HepG2 (cell line): ENCODE measurements at regions of chr1 and their contacts with region 1.

Region 1: GRCh38 chr1:206106328-206107167 is 10.6 kb downstream of the AVPR1B start:
- DNase-seq: peak; percentile 52
- ATAC-seq: peak; percentile 82
- H3K4me3 ChIP-seq: no peak overlapping the region
- H3K27ac ChIP-seq: no peak overlapping the region
- H3K4me1 ChIP-seq: peaks cover 13% of the 10 kb centered on the region
- H3K27me3 ChIP-seq: no peaks in the 10 kb centered on the region
- CTCF ChIP-seq: peak; percentile 95
- EP300 ChIP-seq: no peak
- POLR2A ChIP-seq: no peak
- RAD21 ChIP-seq: peak; percentile 91

Region 2: GRCh38 chr1:205791568-205792180 is 314.9 kb before region 1 on chr1:
- CTCF ChIA-PET with region 1: no interaction called
- POLR2A ChIA-PET with region 1: no interaction called
- in situ Hi-C with region 1: loop called (anchors 10 kb)
- intact Hi-C with region 1: no loop called
- DNase-seq: peak; percentile 48
- ATAC-seq: peak; percentile 99
- H3K4me3 ChIP-seq: no peak overlapping the region
- H3K27ac ChIP-seq: no peak overlapping the region
- H3K4me1 ChIP-seq: no peaks in the 10 kb centered on the region
- H3K27me3 ChIP-seq: no peaks in the 10 kb centered on the region; a peak in 1 of 5 replicates
- CTCF ChIP-seq: peak; percentile 87
- EP300 ChIP-seq: no peak
- POLR2A ChIP-seq: no peak
- RAD21 ChIP-seq: peak; percentile 81

Region 3: DNA sequence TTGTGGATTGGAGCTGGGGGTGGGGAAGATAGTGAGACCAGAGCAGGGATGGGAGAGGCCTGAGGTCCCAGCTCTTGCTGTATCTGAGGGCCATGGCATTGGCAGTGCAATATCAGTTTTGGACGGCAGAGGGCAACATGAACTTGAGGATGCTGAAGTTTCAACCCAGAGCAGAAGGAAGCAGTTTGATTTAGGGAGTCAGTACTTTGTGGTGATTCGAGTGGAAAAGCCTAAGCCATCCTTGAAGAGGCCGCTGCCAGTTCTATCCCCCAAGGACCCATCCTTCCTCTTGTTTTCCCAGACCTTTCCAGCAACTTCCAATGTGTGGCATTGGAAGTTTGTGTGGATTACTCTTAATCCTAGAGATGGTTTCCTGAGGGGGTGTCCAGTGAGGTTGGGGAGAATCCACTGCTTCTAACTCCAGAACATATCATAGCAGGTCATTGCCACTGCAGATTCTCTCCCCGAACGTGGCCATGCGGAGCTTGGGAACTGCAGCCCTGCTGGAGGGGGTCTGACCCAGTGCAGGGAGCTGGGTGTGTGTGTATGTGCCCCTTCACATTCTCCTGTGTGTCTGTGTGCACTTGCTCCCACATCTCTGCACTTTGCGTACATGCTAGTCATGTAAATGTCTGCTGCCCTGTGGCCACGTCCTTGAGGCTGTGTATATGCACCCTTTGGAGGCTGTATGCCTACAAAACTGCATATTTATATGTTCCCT is 187.4 kb before region 1 on chr1:
- CTCF ChIA-PET with region 1: interaction called, 5 read pairs
- POLR2A ChIA-PET with region 1: no interaction called
- in situ Hi-C with region 1: loop called (anchors 10 kb)
- intact Hi-C with region 1: loop called (anchors 1 kb)
- DNase-seq: peak; percentile 52
- ATAC-seq: peak; percentile 85
- H3K4me3 ChIP-seq: no peak overlapping the region
- H3K27ac ChIP-seq: no peak overlapping the region
- H3K4me1 ChIP-seq: 0 out of 2 replicates have a peak, but pooled peaks cover 4% of the 10 kb centered on the region
- H3K27me3 ChIP-seq: peaks cover 2 to 3% of the 10 kb centered on the region in 2 experiments; a peak in 2 of 5 replicates
- CTCF ChIP-seq: peak; percentile 91
- EP300 ChIP-seq: no peak
- POLR2A ChIP-seq: no peak
- RAD21 ChIP-seq: peak; percentile 82

Region 4: DNA sequence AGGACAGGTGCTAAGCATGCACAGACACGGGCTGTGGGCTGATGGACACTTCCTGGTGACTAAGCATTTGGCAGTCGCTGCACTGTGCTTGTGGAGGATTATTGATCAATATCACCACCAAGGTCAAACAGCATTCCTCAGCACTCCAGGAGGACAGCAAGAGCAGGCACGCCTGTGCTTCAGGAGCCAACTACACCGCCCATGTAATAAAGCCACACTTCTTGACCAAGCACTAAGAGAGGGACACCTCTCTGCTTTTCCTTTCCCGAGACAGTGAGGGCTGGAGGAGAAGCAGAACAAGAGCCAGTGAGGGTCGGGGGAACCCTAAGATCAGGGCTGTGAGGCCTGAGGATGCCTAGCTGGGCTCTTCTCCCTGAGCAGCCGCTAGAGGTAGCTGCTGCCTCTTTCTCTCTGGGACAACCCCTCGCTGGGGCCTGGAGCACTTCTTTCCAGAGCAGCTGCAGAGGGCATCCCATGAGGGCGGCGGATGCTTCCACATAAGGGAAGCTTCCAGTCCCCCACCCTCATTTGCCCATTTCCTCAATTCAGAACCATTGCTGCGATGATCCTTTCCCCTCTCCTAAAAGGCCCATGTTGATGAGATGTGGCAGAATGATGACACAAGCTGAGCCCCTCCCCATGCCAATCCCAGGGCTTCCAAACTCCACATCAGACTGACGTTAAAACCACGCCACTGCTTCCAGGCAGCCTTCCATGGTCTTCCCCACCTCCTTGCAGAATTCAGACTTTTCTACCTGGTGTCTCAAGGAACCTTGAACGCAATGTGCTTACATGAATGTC is 122.4 kb before region 1 on chr1:
- CTCF ChIA-PET with region 1: interaction called, 19 read pairs
- POLR2A ChIA-PET with region 1: no interaction called
- in situ Hi-C with region 1: loop called (anchors 5 kb)
- intact Hi-C with region 1: no loop called
- DNase-seq: peak; percentile 80
- ATAC-seq: peak; percentile 95
- H3K4me3 ChIP-seq: peak overlapping the region in 1 of 3 experiments; percentile 38; a peak in 2 of 6 replicates
- H3K27ac ChIP-seq: no peak overlapping the region
- H3K4me1 ChIP-seq: peaks cover 17% of the 10 kb centered on the region
- H3K27me3 ChIP-seq: peaks cover 0 to 12% of the 10 kb centered on the region in 2 experiments; a peak in 3 of 5 replicates
- CTCF ChIP-seq: peak; percentile 92
- EP300 ChIP-seq: 0 out of 4 replicates have a peak, but pooled peaks of 1 of the 2 experiments have one; percentile 8
- POLR2A ChIP-seq: no peak
- RAD21 ChIP-seq: peak; percentile 80

Region 5: GRCh38 chr1:206030714-206031113 is 75.8 kb before region 1 on chr1:
- CTCF ChIA-PET with region 1: interaction called, 105 read pairs
- POLR2A ChIA-PET with region 1: interaction called, 4 read pairs
- in situ Hi-C with region 1: loop called (anchors 5 kb)
- intact Hi-C with region 1: loop called (anchors 1 kb)
- DNase-seq: peak; percentile 87
- ATAC-seq: peak; percentile 99
- H3K4me3 ChIP-seq: no peak overlapping the region
- H3K27ac ChIP-seq: no peak overlapping the region
- H3K4me1 ChIP-seq: peaks cover 19% of the 10 kb centered on the region
- H3K27me3 ChIP-seq: peaks cover 0 to 22% of the 10 kb centered on the region in 2 experiments; a peak in 2 of 5 replicates
- CTCF ChIP-seq: peak; percentile 96
- EP300 ChIP-seq: no peak
- POLR2A ChIP-seq: no peak
- RAD21 ChIP-seq: peak; percentile 89

Region 6: GRCh38 chr1:206059355-206059915 is 47.1 kb before region 1 on chr1:
- CTCF ChIA-PET with region 1: no interaction called
- POLR2A ChIA-PET with region 1: interaction called, 5 read pairs
- in situ Hi-C with region 1: no loop called
- intact Hi-C with region 1: loop called (anchors 2 kb)
- DNase-seq: no peak
- ATAC-seq: no peak
- H3K4me3 ChIP-seq: no peak overlapping the region
- H3K27ac ChIP-seq: no peak overlapping the region
- H3K4me1 ChIP-seq: peaks cover 38% of the 10 kb centered on the region
- H3K27me3 ChIP-seq: no peaks in the 10 kb centered on the region
- CTCF ChIP-seq: no peak
- EP300 ChIP-seq: no peak
- POLR2A ChIP-seq: no peak
- RAD21 ChIP-seq: no peak